CD14-positive monocyte (primary cell): ENCODE measurements at regions of chr12 and their contacts with region 1.

Region 1: DNA sequence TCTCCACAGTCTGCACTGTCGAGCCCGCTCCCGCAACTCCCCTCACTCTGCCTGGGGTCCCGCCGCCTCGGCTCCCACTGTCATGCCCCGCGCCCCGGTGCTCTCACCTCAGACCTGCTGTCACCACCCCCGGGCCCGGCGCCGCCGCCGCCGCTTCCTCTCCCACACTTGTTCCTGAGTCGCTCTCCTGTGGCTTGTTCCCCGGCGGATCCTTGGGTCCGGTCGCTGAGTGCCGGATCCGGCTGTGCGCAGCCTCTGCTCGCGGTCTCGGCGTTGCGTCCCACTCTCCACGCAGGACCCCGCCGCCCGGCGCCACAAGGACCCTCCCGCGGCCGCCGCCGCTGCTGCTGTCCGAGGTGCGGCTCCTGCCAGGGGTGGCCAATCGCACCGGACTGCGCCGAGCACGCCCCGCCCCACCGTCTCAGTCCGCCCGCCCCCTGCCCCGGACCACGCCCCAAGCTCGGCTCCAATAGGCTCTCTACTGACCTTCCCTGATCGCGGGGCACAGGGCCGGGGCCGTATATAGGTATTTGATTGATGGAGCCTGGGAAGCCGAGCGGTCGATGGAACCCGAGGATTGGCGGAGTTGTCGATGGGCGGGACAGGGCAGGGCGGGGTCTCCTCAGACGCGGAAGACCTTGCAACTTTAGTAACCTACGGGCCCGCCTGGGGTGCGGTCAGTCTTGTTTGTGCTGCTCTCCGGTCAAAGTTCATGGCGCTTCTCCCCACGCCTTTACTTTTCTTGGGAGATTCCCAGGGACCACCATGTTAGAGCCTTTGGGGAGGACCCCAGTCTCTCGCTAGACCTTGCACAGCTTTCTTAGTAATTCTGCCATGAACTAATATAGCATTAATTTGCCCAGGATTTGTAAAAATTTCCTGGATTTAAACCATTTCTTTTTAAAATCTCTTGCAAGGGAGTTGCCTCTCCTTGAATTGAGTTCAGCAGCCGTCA is at the start of gene TAOK3:
- DNase-seq: peak; percentile 98
- H3K4me3 ChIP-seq: peak within 1 kb of the TSS; percentile 89 to 96 (median 94)
- H3K4me3 Mint-ChIP-seq: peak within 1 kb of the TSS; percentile 98 to 99
- H3K27ac ChIP-seq: peak within 1 kb of the TSS; percentile 68 to 89
- H3K27ac Mint-ChIP-seq: peak within 1 kb of the TSS; percentile 86 to 96 (median 95)
- H3K4me1 ChIP-seq: peaks cover 46 to 63% of the 10 kb centered on the region in 2 donors
- H3K4me1 Mint-ChIP-seq: peaks cover 47% of the 10 kb centered on the region
- H3K27me3 ChIP-seq: no peaks in the 10 kb centered on the region
- H3K27me3 Mint-ChIP-seq: no peaks in the 10 kb centered on the region
- CTCF ChIP-seq: no peak
- polyA plus RNA-seq, gene TAOK3: 19.7 to 58.3 (median 44.8) TPM

Region 2: GRCh38 chr12:118061011-118061875 is 311.6 kb before region 1 on chr12 and contains the start of gene WSB2:
- intact Hi-C with region 1: loop called (anchors 10 kb)
- DNase-seq: peak in 1 of 3 donors; percentile 19
- H3K4me3 ChIP-seq: peak within 1 kb of the TSS; percentile 95 to 99 (median 96)
- H3K4me3 Mint-ChIP-seq: peak within 1 kb of the TSS; percentile 96 to 99
- H3K27ac ChIP-seq: peak within 1 kb of the TSS; percentile 58 to 84
- H3K27ac Mint-ChIP-seq: peak within 1 kb of the TSS; percentile 66 to 96 (median 90)
- H3K4me1 ChIP-seq: peaks cover 50 to 57% of the 10 kb centered on the region in 2 donors
- H3K4me1 Mint-ChIP-seq: peaks cover 52% of the 10 kb centered on the region
- H3K27me3 ChIP-seq: no peaks in the 10 kb centered on the region
- H3K27me3 Mint-ChIP-seq: peaks cover 5 to 10% (median 6%) of the 10 kb centered on the region in 3 donors
- CTCF ChIP-seq: no peak
- polyA plus RNA-seq, gene WSB2: 25.4 to 36.3 (median 25.8) TPM

Region 3: DNA sequence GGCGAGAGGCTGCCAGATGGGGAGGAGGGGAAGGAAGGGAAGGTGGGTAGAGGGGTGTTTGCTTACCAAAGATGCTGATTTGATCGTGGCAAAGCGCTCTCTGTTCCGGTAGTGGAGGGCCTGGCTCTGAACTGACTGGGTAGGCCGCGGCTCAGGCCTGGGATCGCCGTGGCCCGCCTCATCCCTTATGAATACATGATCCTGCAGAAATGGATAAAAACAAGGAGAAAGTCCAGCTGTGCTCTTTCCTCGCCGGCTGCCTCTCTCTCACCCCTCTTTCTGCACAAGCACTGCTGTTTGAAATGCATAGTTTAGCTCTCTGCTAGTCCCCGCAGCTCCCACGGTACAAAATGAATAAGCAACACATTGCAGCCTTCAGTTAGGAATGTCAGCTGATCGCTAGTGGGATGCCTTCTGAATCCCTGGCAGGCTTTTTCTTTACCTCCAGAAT is 183.1 kb before region 1 on chr12:
- intact Hi-C with region 1: loop called in 1 of 2 experiments (anchors 10 kb)
- DNase-seq: no peak
- H3K4me3 ChIP-seq: no peak overlapping the region
- H3K4me3 Mint-ChIP-seq: no peak overlapping the region
- H3K27ac ChIP-seq: no peak overlapping the region
- H3K27ac Mint-ChIP-seq: peak overlapping the region in 2 of 7 donors; percentile 27 to 48
- H3K4me1 ChIP-seq: peaks cover 3 to 5% of the 10 kb centered on the region in 2 donors
- H3K4me1 Mint-ChIP-seq: peaks cover 6% of the 10 kb centered on the region
- H3K27me3 ChIP-seq: no peaks in the 10 kb centered on the region
- H3K27me3 Mint-ChIP-seq: peaks cover 0 to 1% (median 0%) of the 10 kb centered on the region in 3 donors
- CTCF ChIP-seq: no peak

Region 4: DNA sequence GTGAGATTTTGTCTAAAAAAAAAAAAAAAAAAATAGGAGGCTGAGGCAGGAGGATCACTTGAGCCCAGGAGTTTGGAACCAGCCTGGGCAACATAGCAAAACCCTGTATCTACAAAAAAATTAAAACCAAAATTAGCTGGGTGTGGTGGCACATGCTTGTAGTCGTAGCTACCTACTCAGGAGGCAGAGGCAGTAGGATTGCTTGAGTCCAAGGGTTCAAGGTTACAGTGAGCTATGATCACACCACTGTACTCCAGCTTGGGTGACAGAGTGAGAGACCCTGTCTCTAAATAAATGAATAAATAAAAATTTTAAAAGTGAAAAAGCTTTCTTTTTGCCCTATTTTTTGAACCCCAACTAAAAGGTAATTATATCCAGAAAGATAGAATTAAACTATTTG is 123.3 kb before region 1 on chr12:
- intact Hi-C with region 1: no loop called
- DNase-seq: no peak
- H3K4me3 ChIP-seq: no peak overlapping the region
- H3K4me3 Mint-ChIP-seq: no peak overlapping the region
- H3K27ac ChIP-seq: no peak overlapping the region
- H3K27ac Mint-ChIP-seq: no peak overlapping the region
- H3K4me1 ChIP-seq: no peaks in the 10 kb centered on the region
- H3K4me1 Mint-ChIP-seq: peaks cover 3% of the 10 kb centered on the region
- H3K27me3 ChIP-seq: no peaks in the 10 kb centered on the region
- H3K27me3 Mint-ChIP-seq: no peaks in the 10 kb centered on the region
- CTCF ChIP-seq: no peak

Region 5: DNA sequence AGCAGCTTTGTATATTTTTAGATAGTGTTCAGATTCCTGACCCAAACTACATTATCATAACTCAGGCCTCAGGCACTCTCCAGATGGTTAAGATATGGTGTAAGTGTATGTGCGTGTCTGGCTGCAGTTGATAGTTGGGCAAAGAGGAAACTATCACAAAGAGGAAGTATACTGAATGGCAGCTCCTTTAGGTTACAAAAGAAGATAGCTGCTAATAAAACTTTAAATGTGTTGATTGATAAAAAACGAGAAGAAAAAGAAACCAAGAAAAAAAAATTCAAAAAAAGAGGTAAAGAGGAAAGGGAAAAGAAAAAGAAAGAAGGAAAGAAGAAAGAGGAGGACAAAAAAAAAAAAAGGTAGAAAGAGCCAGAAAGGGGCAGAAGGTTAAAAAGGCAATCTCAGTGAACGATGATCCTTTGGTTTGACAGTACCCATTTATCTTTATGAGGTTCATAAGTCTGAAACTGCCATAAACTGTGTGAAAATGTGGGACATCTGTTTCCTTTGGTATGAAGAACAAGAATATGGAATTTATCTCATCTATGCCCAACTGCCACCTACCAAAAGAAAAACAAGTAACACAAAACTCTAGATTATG is 42.3 kb before region 1 on chr12:
- intact Hi-C with region 1: loop called (anchors 5 kb)
- DNase-seq: peak; percentile 77 to 86 (median 85)
- H3K4me3 ChIP-seq: peak overlapping the region in 2 of 3 experiments; percentile 6 to 33
- H3K4me3 Mint-ChIP-seq: peak overlapping the region; percentile 31 to 83
- H3K27ac ChIP-seq: peak overlapping the region in 1 of 2 donors; percentile 70
- H3K27ac Mint-ChIP-seq: peak overlapping the region; percentile 83 to 99 (median 92)
- H3K4me1 ChIP-seq: peaks cover 45 to 73% of the 10 kb centered on the region in 2 donors
- H3K4me1 Mint-ChIP-seq: peaks cover 74% of the 10 kb centered on the region
- H3K27me3 ChIP-seq: no peaks in the 10 kb centered on the region
- H3K27me3 Mint-ChIP-seq: peaks cover 0 to 5% (median 0%) of the 10 kb centered on the region in 3 donors
- CTCF ChIP-seq: no peak